ENCODE measurements at regions of chr14 and their contacts with region 1.

Region 1: GRCh38 chr14:54782751-54783679 is 119.6 kb downstream of the GCH1 start:
- DNase-seq: no peak
- H3K4me3 ChIP-seq: no peak overlapping the region
- H3K27ac ChIP-seq: no peak overlapping the region
- H3K4me1 ChIP-seq: peaks cover 0 to 2% (median 0%) of the 10 kb centered on the region in 4 experiments; a peak in 1 of 7 replicates
- H3K27me3 ChIP-seq: no peaks in the 10 kb centered on the region
- CTCF ChIP-seq: peak; percentile 48 to 65 (median 54)
- EP300 ChIP-seq: no peak
- POLR2A ChIP-seq: no peak
- RAD21 ChIP-seq: peak; percentile 27 to 54

Region 2: GRCh38 chr14:54503476-54504257 is 279.3 kb before region 1 on chr14:
- CTCF ChIA-PET with region 1: no interaction called
- POLR2A ChIA-PET with region 1: no interaction called
- DNase-seq: no peak
- H3K4me3 ChIP-seq: no peak overlapping the region
- H3K27ac ChIP-seq: no peak overlapping the region
- H3K4me1 ChIP-seq: no peaks in the 10 kb centered on the region
- H3K27me3 ChIP-seq: no peaks in the 10 kb centered on the region
- CTCF ChIP-seq: peak in 1 of 3 experiments; percentile 44; a peak in 2 of 4 replicates
- EP300 ChIP-seq: no peak
- POLR2A ChIP-seq: no peak
- RAD21 ChIP-seq: peak; percentile 28 to 40; a peak in 3 of 4 replicates

Region 3: GRCh38 chr14:54893151-54893760 is 110.2 kb after region 1 on chr14:
- CTCF ChIA-PET with region 1: interaction called, 10 read pairs
- POLR2A ChIA-PET with region 1: no interaction called
- DNase-seq: no peak
- H3K4me3 ChIP-seq: no peak overlapping the region
- H3K27ac ChIP-seq: no peak overlapping the region
- H3K4me1 ChIP-seq: peaks cover 0 to 4% (median 2%) of the 10 kb centered on the region in 4 experiments; a peak in 3 of 7 replicates
- H3K27me3 ChIP-seq: no peaks in the 10 kb centered on the region
- CTCF ChIP-seq: peak in 2 of 3 experiments; percentile 32 to 58; a peak in 2 of 4 replicates
- EP300 ChIP-seq: no peak
- POLR2A ChIP-seq: no peak
- RAD21 ChIP-seq: peak; percentile 39 to 51

Region 4: DNA sequence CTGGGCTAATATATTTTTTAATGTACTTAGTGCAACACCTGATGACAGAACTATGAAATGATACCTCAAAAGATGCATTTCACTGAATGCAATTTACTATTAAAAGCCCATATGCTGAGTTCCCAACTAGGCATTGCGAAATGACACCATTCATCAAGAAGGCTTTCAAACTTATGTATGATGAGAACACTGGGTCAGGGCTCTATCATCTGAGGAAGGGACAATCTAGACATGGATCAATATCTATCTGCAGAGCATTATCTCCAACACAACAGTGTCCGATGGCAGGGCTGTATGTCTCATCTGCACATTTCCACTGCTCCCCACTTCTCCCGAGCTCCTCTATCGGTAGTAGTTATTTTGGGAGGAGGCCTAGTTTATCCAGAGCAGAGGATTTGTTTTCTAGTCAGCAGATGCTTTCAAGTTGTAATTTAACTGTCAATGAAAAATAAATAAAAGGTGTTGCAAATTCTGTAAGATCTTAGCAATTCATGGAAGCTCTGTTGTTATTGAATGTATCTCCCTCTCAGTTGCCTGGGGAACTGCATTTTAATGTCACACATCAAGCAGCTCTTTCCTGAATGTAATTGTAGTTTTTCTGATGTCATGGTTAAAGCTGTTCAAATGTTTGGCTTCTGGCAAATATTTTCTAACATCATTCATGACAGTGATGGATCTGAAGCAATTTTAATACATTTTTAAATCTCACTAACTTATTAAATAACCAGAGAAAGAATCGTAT is 127.0 kb after region 1 on chr14:
- CTCF ChIA-PET with region 1: no interaction called
- POLR2A ChIA-PET with region 1: no interaction called
- DNase-seq: no peak
- H3K4me3 ChIP-seq: no peak overlapping the region
- H3K27ac ChIP-seq: no peak overlapping the region
- H3K4me1 ChIP-seq: no peaks in the 10 kb centered on the region
- H3K27me3 ChIP-seq: no peaks in the 10 kb centered on the region
- CTCF ChIP-seq: no peak
- EP300 ChIP-seq: no peak
- POLR2A ChIP-seq: no peak
- RAD21 ChIP-seq: no peak